T-cell (primary cell): ENCODE measurements at regions of chr7 and their contacts with region 1.

Region 1: GRCh38 chr7:157339777-157340677 is 3.2 kb downstream of the DNAJB6 start:
- DNase-seq: peak; percentile 37 to 82 (median 62)
- ATAC-seq: no peak
- H3K4me3 ChIP-seq: no peak overlapping the region
- H3K4me3 Mint-ChIP-seq: peak overlapping the region; percentile 93 to 95 (median 95)
- H3K27ac ChIP-seq: no peak overlapping the region
- H3K27ac Mint-ChIP-seq: peak overlapping the region; percentile 0 to 17
- H3K4me1 ChIP-seq: peaks cover 18 to 66% of the 10 kb centered on the region in 2 experiments
- H3K4me1 Mint-ChIP-seq: peaks cover 60 to 66% (median 64%) of the 10 kb centered on the region in 3 donors
- H3K27me3 ChIP-seq: no peaks in the 10 kb centered on the region
- H3K27me3 Mint-ChIP-seq: no peaks in the 10 kb centered on the region

Region 2: GRCh38 chr7:157204134-157204533 is 135.9 kb before region 1 on chr7:
- CTCF ChIA-PET with region 1: no interaction called
- POLR2A ChIA-PET with region 1: no interaction called
- DNase-seq: no peak
- ATAC-seq: no peak
- H3K4me3 ChIP-seq: no peak overlapping the region
- H3K4me3 Mint-ChIP-seq: no peak overlapping the region
- H3K27ac ChIP-seq: no peak overlapping the region
- H3K27ac Mint-ChIP-seq: no peak overlapping the region
- H3K4me1 ChIP-seq: no peaks in the 10 kb centered on the region
- H3K4me1 Mint-ChIP-seq: peaks cover 0 to 2% (median 0%) of the 10 kb centered on the region in 3 donors
- H3K27me3 ChIP-seq: no peaks in the 10 kb centered on the region
- H3K27me3 Mint-ChIP-seq: no peaks in the 10 kb centered on the region

Region 3: DNA sequence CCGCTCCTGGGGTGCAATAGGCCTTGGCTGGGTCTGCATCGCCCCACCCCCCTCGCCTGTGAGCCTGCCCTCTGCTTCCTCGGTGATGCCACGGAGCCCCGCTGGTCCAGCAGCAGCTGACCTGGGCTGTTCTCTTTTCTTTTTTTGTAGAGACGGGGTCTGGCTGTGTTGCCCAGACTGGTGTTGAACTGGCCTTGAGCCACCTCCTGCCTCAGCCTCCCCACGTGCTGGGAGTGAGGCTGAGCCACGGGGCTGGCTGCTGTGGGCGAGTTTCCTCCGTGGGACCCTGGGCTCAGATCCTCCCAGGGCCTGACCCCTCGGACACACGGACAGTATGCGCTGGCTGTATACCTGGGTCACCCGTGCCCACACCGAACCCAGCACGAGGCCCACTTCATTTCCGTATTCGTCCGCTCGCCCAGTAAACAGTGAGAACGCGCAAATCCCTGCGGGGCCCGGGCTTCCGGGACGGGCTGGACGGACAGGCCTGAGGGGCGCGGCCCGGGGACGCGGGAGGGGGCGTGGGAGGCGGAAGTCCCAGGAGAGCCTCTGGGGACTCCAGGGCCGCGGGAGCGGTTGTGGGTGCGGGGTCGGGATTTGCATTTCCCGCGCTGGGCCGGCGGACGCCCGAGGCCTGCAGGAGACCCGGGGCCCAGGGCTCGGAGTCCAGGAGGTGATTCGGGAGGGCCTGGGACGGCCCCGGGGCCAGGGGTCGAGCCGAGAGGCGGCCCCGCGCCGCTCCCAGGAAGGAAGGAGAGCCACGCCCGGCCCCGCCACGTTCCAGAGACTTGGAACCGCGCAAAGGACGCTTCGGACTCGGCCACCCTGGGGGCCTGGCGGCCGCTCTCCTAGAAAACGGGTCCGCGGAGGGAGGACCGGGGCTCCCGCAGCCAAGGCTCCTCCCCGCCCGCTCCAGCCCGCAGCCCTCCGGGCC is 61.0 kb before region 1 on chr7:
- CTCF ChIA-PET with region 1: interaction called, 4 to 9 read pairs
- POLR2A ChIA-PET with region 1: interaction called, 4 to 18 read pairs
- DNase-seq: no peak
- ATAC-seq: no peak
- H3K4me3 ChIP-seq: no peak overlapping the region
- H3K4me3 Mint-ChIP-seq: peak overlapping the region in 2 of 3 donors; percentile 6 to 56
- H3K27ac ChIP-seq: no peak overlapping the region
- H3K27ac Mint-ChIP-seq: no peak overlapping the region
- H3K4me1 ChIP-seq: peaks cover 0 to 45% of the 10 kb centered on the region in 2 experiments
- H3K4me1 Mint-ChIP-seq: peaks cover 0 to 29% (median 16%) of the 10 kb centered on the region in 3 donors
- H3K27me3 ChIP-seq: peaks cover 0 to 61% of the 10 kb centered on the region in 2 experiments
- H3K27me3 Mint-ChIP-seq: peaks cover 3 to 26% of the 10 kb centered on the region in 2 donors